GM10248 (cell line): ENCODE measurements at regions of chr4 and their contacts with region 1.

Region 1: GRCh38 chr4:152045807-152046571 is 285.2 kb upstream of the GATB start:
- DNase-seq: peak; percentile 72
- CTCF ChIP-seq: peak; percentile 56

Region 2: DNA sequence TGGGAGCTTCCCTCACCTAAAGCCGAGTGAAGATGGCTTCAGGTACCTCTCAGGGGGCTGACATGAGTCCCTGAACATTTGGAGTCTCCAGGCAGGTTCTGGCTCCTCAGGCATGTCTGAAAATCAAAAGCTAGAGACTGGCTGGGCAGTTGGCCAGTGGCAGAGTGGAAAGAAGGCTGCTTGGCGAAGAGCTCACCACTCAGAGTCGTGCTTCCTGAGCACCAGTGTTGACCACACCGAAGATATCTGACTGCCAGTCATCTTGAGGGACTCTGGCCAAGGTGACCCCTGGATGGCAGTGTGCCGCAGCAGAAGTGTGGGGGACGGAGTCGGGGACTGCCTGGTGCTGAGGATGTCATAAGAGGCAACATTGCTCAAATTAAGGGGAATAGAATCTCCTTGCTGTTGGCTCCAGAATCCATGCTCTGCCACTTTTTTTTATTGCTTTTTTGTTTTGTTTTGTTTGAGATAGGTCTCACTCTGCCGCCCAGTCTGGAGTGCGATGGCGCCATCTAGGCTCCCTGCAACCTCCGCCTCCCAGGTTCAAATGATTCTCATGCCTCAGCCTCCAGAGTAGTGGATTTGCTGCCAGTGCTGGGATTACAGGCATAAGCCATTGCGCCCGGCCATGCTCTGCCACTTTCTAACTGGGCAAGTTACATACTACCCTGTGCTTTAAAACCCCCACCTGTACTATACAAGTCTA is 112.7 kb before region 1 on chr4:
- CTCF ChIA-PET with region 1: no interaction called
- POLR2A ChIA-PET with region 1: no interaction called
- DNase-seq: no peak
- CTCF ChIP-seq: no peak

Region 3: DNA sequence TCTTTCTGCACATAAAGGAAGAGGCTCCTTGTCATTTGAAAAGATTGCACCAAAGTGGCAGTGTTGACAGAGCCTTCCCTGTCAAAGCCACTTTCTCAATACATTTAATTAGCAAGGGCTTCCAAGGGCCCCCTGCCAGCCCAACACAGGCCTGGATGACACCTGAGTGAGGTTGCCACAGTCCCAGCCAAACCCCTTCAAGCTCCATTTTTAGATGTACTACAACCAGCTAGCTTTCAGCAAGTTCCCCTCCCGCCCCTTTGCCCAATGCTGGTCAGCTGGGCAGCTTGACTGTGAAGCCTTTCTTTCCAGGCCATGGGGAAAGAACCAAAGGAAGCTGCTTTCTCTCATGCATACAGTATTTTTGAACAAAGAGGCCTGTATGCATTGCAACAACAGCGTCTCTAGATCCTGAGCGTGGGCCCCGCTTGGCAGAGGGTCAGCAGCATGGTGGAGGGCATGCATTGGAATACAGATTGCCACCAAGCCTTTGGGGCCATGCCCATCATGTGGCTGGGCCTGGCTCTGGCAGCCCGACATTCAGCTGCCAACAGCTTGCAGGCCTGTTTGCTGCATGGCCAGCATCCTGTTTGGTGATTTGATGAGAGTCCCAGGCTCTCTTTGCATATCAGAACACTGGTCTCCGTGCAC is 24.1 kb before region 1 on chr4:
- CTCF ChIA-PET with region 1: interaction called, 10 read pairs
- POLR2A ChIA-PET with region 1: no interaction called
- DNase-seq: no peak
- CTCF ChIP-seq: no peak

Region 4: GRCh38 chr4:152032722-152033131 is 13.3 kb before region 1 on chr4:
- CTCF ChIA-PET with region 1: interaction called, 10 read pairs
- POLR2A ChIA-PET with region 1: no interaction called
- DNase-seq: no peak
- CTCF ChIP-seq: no peak